WTC11 (cell line): ENCODE measurements at regions of chr21 and their contacts with region 1.

Region 1: DNA sequence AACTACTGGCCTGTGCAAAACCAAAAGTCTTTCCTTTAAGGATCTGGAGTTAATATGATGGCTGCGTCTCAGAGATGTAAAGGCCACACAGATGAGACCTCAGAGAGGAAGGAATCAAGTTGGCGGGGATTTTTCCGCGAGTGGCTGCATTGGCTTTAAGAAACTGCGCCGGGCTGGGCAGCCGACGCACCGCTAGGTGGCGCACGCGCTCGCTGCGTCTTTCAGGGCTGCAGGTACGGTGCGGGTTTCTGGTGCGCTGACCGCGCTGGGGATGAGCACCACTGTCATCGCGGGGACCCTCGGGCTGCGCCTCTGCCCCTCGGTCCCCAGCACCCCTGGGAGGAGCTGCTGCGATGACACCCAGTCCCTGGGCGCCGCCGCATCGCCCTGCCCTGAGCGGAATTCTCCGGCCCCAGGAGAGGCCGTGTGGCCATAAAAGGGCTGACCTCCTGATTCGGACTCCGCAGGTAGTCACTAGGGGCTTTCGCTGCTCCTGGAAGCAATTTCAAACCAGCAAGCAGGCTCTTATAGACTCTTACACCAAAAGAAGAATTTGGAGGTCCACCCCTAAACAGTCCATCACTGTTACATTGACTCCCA is 241.0 kb downstream of the KCNJ6 start:
- DNase-seq: peak; percentile 85
- ATAC-seq: peak; percentile 87
- H3K4me3 Mint-ChIP-seq: peak overlapping the region; percentile 10; the same call in 1 of the 2 replicates
- H3K27ac Mint-ChIP-seq: no peak overlapping the region
- H3K4me1 Mint-ChIP-seq: peaks cover 32% of the 10 kb centered on the region
- H3K27me3 Mint-ChIP-seq: peaks cover 29% of the 10 kb centered on the region
- CTCF ChIP-seq: peak; percentile 97

Region 2: GRCh38 chr21:37407719-37408420 is 267.4 kb before region 1 on chr21:
- CTCF ChIA-PET with region 1: no interaction called
- POLR2A ChIA-PET with region 1: no interaction called
- DNase-seq: no peak
- ATAC-seq: no peak
- H3K4me3 Mint-ChIP-seq: no peak overlapping the region
- H3K27ac Mint-ChIP-seq: peak overlapping the region; percentile 32
- H3K4me1 Mint-ChIP-seq: peaks cover 58% of the 10 kb centered on the region
- H3K27me3 Mint-ChIP-seq: no peaks in the 10 kb centered on the region
- CTCF ChIP-seq: no peak

Region 3: DNA sequence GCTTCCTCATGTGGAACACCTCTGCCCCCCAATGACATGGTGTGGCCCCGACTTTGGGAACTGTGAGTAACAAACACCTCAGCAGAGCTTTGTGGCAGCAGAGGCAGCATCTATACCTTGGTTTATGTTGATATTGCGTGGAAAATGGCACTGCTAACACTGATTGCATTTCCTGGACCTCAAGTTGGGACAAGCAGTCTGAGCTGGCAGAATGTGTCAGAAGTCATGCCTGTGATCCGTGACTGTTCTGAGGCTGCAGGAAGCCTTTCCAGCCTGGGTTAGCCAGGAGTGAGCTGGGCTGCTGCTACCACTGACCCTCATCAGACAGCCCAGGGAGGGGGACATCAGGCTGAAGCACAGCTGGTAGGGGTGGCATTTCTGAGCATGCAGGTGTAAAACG is 27.5 kb before region 1 on chr21:
- CTCF ChIA-PET with region 1: interaction called, 12 read pairs
- POLR2A ChIA-PET with region 1: no interaction called
- DNase-seq: no peak
- ATAC-seq: no peak
- H3K4me3 Mint-ChIP-seq: no peak overlapping the region
- H3K27ac Mint-ChIP-seq: no peak overlapping the region
- H3K4me1 Mint-ChIP-seq: peaks cover 7% of the 10 kb centered on the region
- H3K27me3 Mint-ChIP-seq: no peaks in the 10 kb centered on the region
- CTCF ChIP-seq: no peak